ENCODE measurements at regions of chr17 and their contacts with region 1.

Region 1: GRCh38 chr17:50514946-50515702 is 6.9 kb downstream of the MYCBPAP start:
- DNase-seq: no peak
- H3K4me3 ChIP-seq: no peak overlapping the region
- H3K27me3 ChIP-seq: peaks cover 2% of the 10 kb centered on the region; the same call in 1 of the 2 replicates
- CTCF ChIP-seq: no peak

Region 2: DNA sequence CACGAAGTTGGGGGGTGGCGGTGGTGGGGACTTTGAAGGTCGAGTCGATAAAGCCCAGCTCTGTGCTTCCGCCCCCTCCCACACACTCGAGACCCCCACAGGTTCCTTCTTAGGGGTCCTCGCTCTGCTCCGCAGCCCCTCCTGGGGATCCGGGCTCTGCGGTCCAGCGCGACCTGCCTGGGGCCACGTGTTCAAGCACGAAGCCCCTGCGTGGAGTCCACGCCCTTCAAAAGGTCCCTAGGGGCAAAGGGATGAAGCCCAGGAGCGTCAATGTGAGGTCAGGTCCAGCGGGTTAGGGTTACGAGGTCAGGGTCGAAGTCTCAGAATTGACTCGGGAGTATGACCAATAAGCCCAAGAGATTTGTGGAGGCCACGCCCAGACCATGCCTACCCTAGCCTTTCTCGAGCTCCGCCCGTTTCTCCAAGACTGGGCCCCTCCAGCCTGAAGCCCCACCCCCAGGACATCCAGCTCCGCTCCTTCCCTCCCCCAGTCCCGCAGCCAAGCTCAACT is 44.6 kb after region 1 on chr17:
- CTCF ChIA-PET with region 1: no interaction called
- POLR2A ChIA-PET with region 1: no interaction called
- DNase-seq: no peak
- H3K4me3 ChIP-seq: peak overlapping the region; percentile 37
- H3K27me3 ChIP-seq: peaks cover 40% of the 10 kb centered on the region
- CTCF ChIP-seq: no peak

Region 3: DNA sequence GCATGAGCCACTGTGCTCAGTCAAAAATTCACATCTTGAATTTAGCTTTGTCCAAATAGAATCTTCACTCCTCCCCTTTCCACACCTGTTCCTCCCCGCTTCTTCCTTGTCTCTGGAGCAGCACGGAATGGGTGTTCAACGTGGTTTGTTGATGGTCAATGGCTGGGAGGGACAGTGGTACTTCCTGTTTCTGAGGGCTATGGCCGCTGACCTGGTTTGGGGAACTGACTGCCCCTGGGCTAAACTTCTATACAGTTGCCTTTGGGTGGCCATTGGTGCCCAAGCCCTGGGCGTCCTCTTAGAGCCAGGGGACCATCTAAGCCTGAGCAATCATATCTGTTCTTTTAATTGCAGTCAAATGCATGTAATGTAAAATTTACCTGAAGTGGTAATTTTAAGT is 301.1 kb after region 1 on chr17:
- CTCF ChIA-PET with region 1: no interaction called
- POLR2A ChIA-PET with region 1: interaction called, 14 read pairs
- DNase-seq: no peak
- H3K4me3 ChIP-seq: no peak overlapping the region
- H3K27me3 ChIP-seq: peaks cover 6% of the 10 kb centered on the region; the same call in 1 of the 2 replicates
- CTCF ChIP-seq: no peak